PC-9 (cell line): ENCODE measurements at regions of chr2 and their contacts with region 1.

Region 1: DNA sequence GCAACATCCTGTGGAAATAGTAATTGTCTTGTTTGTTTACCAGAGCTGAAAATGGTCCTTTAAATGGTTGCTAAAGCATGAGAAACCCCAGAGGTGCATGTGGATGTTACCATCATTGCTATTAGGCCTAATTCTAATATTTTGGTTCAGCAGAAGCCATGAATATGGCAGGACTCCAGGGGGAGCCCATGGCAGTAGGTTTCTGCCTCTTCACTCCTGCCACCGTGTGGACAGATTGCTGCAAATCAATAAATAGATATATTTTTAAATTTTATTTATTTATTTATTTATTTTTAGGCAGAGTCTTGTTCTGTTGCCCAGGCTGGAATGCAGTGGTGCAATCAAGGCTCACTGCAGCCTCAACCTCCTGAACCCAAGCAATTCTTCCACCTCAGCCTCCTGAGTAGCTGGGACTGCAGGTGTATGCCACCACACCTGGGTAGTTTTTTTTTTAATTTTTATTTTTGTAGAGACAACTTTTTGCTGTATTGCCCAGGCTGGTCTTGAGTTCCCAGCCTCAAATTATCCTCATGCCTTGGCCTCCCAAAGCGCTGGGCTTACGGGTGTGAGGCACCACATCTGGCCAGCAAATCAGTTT is 54.9 kb upstream of the CAPN13 start:
- DNase-seq: peak; percentile 38 to 67
- H3K4me3 ChIP-seq: no peak overlapping the region
- H3K27ac ChIP-seq: no peak overlapping the region
- H3K4me1 ChIP-seq: no peaks in the 10 kb centered on the region
- H3K27me3 ChIP-seq: no peaks in the 10 kb centered on the region
- CTCF ChIP-seq: peak; percentile 86

Region 2: GRCh38 chr2:30165050-30165520 is 697.1 kb before region 1 on chr2:
- CTCF ChIA-PET with region 1: interaction called, 4 read pairs
- POLR2A ChIA-PET with region 1: interaction called, 4 read pairs
- intact Hi-C with region 1: loop called (anchors 10 kb)
- DNase-seq: peak; percentile 54 to 84
- H3K4me3 ChIP-seq: no peak overlapping the region
- H3K27ac ChIP-seq: no peak overlapping the region
- H3K4me1 ChIP-seq: peaks cover 21% of the 10 kb centered on the region
- H3K27me3 ChIP-seq: peaks cover 2% of the 10 kb centered on the region; the same call in 1 of the 2 replicates
- CTCF ChIP-seq: peak; percentile 90

Region 3: GRCh38 chr2:30985493-30986230 is 123.5 kb after region 1 on chr2:
- CTCF ChIA-PET with region 1: no interaction called
- POLR2A ChIA-PET with region 1: no interaction called
- intact Hi-C with region 1: no loop called
- DNase-seq: no peak
- H3K4me3 ChIP-seq: no peak overlapping the region
- H3K27ac ChIP-seq: no peak overlapping the region
- H3K4me1 ChIP-seq: 0 out of 2 replicates have a peak, but pooled peaks cover under 1% of the 10 kb centered on the region
- H3K27me3 ChIP-seq: no peaks in the 10 kb centered on the region
- CTCF ChIP-seq: no peak

Region 4: DNA sequence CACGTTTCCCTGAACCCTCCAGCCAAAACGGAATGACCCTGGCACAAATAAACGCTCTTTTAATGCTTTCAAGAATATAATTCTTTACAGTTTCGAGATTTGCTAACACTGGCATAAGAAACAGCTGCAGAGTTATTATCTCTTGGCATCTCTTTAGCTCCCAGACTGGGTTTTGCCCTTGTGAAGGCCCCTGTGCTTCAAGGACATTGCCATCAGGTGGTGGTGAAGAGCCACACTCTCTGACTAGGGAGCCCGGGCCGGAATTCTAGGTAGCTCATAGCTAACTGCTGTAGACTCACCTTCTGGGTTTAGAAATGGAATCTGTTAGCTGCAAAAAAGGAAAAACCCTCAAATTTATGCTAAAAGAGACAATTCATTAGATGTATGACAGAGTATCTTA is 289.3 kb after region 1 on chr2:
- CTCF ChIA-PET with region 1: interaction called, 10 read pairs
- POLR2A ChIA-PET with region 1: no interaction called
- intact Hi-C with region 1: no loop called
- DNase-seq: no peak
- H3K4me3 ChIP-seq: no peak overlapping the region
- H3K27ac ChIP-seq: no peak overlapping the region
- H3K4me1 ChIP-seq: peaks cover 9% of the 10 kb centered on the region
- H3K27me3 ChIP-seq: peaks cover 20% of the 10 kb centered on the region; the same call in 1 of the 2 replicates
- CTCF ChIP-seq: no peak; the same call in 1 of the 2 replicates

Region 5: GRCh38 chr2:31170071-31170698 is 308.0 kb after region 1 on chr2:
- CTCF ChIA-PET with region 1: no interaction called
- POLR2A ChIA-PET with region 1: no interaction called
- intact Hi-C with region 1: loop called (anchors 1 kb)
- DNase-seq: peak; percentile 42 to 53
- H3K4me3 ChIP-seq: no peak overlapping the region
- H3K27ac ChIP-seq: no peak overlapping the region
- H3K4me1 ChIP-seq: no peaks in the 10 kb centered on the region
- H3K27me3 ChIP-seq: no peaks in the 10 kb centered on the region
- CTCF ChIP-seq: peak; percentile 99

Region 6: DNA sequence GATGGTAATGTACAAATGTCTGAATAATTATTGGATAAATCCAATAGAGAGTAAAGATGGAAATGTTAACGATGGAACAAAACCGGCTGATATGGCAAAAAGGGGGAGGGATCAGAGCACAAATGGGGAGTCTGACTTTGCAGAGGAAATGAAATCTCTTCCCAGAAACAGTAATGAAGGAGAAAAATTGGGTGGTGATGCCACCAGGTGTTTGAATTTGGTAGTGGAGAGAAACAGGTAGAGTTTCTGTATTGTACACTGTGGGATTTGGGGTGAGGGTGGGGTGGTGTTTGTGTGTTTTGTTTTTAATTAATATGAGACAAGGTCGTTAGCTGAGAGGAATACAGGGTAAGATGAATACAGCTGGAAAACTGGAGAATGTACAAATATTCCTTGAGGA is 572.8 kb after region 1 on chr2:
- CTCF ChIA-PET with region 1: no interaction called
- POLR2A ChIA-PET with region 1: no interaction called
- intact Hi-C with region 1: loop called (anchors 10 kb)
- DNase-seq: no peak
- H3K4me3 ChIP-seq: no peak overlapping the region
- H3K27ac ChIP-seq: no peak overlapping the region
- H3K4me1 ChIP-seq: peaks cover 15% of the 10 kb centered on the region
- H3K27me3 ChIP-seq: no peaks in the 10 kb centered on the region
- CTCF ChIP-seq: peak; percentile 49; the same call in 1 of the 2 replicates